AG04450 (cell line): ENCODE measurements at regions of chr2 and their contacts with region 1.

Region 1: DNA sequence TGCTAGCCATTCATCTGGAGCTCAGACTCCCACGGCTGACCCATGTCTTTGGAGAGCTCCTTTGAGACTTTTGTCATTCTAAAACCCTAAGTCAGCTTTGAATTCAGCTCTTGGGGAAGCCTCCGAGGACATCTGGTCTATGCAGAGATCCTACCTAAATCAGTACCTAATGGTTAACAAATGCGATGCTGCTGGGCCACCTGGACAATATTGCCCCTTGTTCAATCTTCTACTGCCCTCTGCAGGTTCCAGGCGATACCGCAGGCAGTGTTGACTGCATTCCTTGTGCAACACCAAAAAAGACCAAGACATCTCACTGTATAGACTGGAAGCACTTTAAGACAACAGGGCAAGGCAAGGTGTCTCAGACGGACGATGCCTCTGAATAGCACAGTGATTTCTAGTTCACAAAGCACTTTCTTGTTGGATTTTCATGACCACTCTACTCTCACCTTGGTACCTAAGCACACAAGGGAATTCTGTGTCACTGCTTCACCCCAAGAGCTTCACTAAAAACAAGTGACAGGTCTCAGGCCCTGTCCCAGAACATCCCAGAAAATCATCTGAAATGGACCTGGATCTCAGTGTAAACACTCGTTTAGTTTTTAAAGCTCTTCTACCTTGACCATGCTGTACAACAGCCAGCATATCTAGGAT is 80.9 kb downstream of the XDH start:
- DNase-seq: peak; percentile 68
- H3K4me3 ChIP-seq: no peak overlapping the region
- H3K27ac ChIP-seq: no peak overlapping the region
- H3K27me3 ChIP-seq: no peaks in the 10 kb centered on the region
- CTCF ChIP-seq: peak; percentile 98

Region 2: GRCh38 chr2:30862054-30862651 is 471.5 kb before region 1 on chr2:
- CTCF ChIA-PET with region 1: interaction called, 29 read pairs
- POLR2A ChIA-PET with region 1: no interaction called
- DNase-seq: peak; percentile 24
- H3K4me3 ChIP-seq: no peak overlapping the region
- H3K27ac ChIP-seq: no peak overlapping the region
- H3K27me3 ChIP-seq: no peaks in the 10 kb centered on the region
- CTCF ChIP-seq: peak; percentile 69

Region 3: DNA sequence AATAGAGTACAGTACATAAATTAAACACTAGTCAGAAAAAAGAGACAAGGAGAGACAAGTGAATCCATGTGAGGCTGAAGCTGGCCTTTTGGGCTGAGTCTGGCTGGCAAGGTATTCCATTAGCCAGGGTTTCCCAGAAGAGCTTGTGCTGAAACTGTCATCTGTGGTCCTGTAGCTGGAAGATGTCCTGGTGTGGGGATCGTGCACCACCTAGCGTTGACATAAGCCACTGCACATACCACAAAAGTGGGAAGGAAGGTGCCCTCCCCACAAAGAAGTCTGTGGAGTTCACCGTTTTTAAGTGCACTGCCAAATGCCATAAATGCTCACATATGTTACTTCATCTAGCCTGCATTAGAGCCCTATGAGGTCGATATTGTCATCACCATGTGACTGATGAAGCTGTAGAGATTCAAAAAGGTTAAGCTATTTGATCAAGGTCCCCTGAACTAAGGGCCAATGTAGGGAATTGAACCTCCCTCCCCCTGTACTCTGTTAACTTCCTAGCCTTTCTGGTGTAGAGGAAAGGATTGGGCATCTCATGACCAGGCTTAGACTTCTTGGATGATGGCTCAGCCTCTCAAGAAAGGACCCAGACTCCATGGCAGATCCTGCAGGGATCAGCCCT is 163.5 kb before region 1 on chr2:
- CTCF ChIA-PET with region 1: interaction called, 27 read pairs
- POLR2A ChIA-PET with region 1: no interaction called
- DNase-seq: peak; percentile 15
- H3K4me3 ChIP-seq: no peak overlapping the region
- H3K27ac ChIP-seq: no peak overlapping the region
- H3K27me3 ChIP-seq: no peaks in the 10 kb centered on the region
- CTCF ChIP-seq: peak; percentile 93

Region 4: DNA sequence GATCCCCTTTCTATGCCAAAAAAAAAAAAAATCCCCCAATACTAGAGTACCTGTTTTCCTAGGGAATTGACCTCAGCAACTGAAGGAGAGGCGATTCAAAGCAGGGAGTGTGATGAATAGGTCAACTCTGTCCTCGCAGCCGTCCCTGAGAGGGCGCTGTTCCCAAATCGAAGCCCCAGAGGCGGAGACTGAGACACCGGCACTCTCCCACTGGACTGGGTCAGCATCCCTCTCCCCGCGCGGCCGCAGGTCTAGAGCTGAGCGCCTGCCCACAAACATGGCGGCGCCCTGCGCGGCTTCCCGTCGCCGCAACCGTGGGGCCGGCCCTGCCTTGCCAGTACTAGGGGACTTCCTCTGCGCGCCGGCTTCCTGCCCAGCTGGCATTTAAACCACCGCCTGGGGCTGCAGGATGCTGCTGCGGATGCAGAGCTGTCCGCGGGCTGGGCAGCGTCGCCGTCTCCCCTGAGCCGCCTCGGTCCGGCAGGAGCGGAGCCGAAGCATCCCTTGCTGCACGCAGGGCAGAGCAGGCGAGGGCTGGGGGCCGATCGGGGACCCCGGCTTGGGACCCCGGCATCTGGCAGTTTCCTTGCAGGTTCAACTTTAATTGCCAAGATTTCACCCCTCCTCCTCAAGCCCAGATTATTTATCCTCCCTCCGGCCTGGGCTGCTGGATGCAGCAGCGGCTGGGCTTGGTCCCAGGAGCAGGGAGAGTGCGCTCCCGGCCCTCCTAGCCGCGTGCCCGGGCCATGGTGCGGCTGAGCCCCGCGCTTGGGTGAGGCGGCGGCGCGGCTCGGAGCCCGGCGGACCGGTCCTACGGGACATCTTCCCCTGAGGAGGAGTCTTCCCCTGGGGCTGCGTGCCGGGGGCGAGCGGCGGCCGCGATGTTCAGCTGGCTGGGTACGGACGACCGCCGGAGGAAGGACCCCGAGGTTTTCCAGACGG is 99.6 kb before region 1 on chr2 and contains the start of gene EHD3:
- CTCF ChIA-PET with region 1: interaction called, 71 read pairs
- POLR2A ChIA-PET with region 1: interaction called, 3 read pairs
- DNase-seq: peak; percentile 77
- H3K4me3 ChIP-seq: peak within 1 kb of the TSS; percentile 83
- H3K27ac ChIP-seq: peak within 1 kb of the TSS; percentile 52
- H3K27me3 ChIP-seq: peaks cover 11% of the 10 kb centered on the region
- CTCF ChIP-seq: peak; percentile 76
- polyA plus RNA-seq, gene EHD3: 39.8 and 48.6 TPM in 2 replicates

Region 5: GRCh38 chr2:31318361-31319336 is 15.0 kb before region 1 on chr2:
- CTCF ChIA-PET with region 1: interaction called, 41 read pairs
- POLR2A ChIA-PET with region 1: interaction called, 7 read pairs
- DNase-seq: peak; percentile 60
- H3K4me3 ChIP-seq: peak overlapping the region; percentile 12; the same call in 1 of the 2 replicates
- H3K27ac ChIP-seq: peak overlapping the region; percentile 96
- H3K27me3 ChIP-seq: no peaks in the 10 kb centered on the region
- CTCF ChIP-seq: no peak

Region 6: GRCh38 chr2:31523871-31524492 is 190.3 kb after region 1 on chr2:
- CTCF ChIA-PET with region 1: interaction called, 10 read pairs
- POLR2A ChIA-PET with region 1: no interaction called
- DNase-seq: peak; percentile 13
- H3K4me3 ChIP-seq: no peak overlapping the region
- H3K27ac ChIP-seq: no peak overlapping the region
- H3K27me3 ChIP-seq: no peaks in the 10 kb centered on the region
- CTCF ChIP-seq: peak; percentile 79